ENCODE measurements at regions of chr5 and their contacts with region 1.

Region 1: DNA sequence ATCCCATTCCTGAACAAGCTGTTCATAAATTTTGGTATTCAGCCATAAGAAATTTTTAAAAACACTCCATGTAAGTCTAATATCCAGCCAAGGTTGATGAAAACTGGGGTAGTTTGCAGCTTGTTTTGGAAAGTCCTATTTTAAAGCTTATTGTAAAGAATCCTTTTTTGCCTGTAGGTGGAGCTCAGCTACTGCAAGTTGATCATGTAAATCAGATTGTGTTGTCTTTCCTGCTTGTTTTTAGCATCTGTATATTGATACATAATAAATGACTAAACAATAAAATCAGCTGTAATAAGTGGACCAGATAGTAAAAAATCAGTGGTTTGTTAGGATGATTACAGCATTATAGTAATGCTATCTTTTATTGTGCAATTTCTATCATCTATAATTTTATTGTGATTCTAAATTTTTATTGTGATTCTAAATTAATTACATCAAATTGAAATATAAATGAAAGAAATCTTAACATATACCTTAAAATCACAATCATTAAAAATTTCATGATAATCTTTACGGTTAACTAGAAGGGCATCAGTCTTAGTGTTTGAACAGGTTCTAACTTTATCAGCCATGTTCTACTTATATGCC is 42.4 kb downstream of the CWC27 start:
- DNase-seq: no peak
- H3K4me3 Mint-ChIP-seq: no peak overlapping the region
- H3K27ac Mint-ChIP-seq: no peak overlapping the region
- H3K4me1 Mint-ChIP-seq: peaks cover 7% of the 10 kb centered on the region
- H3K27me3 Mint-ChIP-seq: no peaks in the 10 kb centered on the region

Region 2: GRCh38 chr5:65035211-65036206 is 224.4 kb after region 1 on chr5:
- intact Hi-C with region 1: loop called (anchors 5 kb)
- DNase-seq: peak; percentile 79
- H3K4me3 Mint-ChIP-seq: peak overlapping the region; percentile 78
- H3K27ac Mint-ChIP-seq: peak overlapping the region; percentile 83
- H3K4me1 Mint-ChIP-seq: peaks cover 34% of the 10 kb centered on the region
- H3K27me3 Mint-ChIP-seq: no peaks in the 10 kb centered on the region

Region 3: GRCh38 chr5:65184780-65185179 is 373.6 kb after region 1 on chr5:
- intact Hi-C with region 1: loop called (anchors 5 kb)
- DNase-seq: no peak
- H3K4me3 Mint-ChIP-seq: no peak overlapping the region
- H3K27ac Mint-ChIP-seq: no peak overlapping the region
- H3K4me1 Mint-ChIP-seq: no peaks in the 10 kb centered on the region
- H3K27me3 Mint-ChIP-seq: peaks cover 15% of the 10 kb centered on the region

Region 4: DNA sequence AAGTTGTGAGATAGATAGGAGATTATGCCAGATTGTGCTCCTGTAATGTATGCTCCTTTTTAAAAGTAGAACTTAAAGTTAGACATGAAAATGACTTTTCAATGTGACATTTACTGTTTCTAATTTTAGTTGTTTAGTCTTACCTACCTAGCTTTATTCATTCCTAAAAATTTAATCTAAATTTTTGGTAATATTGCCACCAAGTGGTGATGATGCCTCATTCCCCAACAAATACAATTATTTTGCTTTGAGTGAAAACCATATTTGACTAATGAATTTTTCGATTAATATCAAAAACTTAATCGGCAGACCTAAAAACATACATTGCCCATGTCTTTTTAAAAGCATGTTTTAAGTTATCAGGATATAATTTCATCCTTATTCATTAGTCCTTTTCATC is 777.5 kb after region 1 on chr5:
- intact Hi-C with region 1: no loop called
- DNase-seq: no peak
- H3K4me3 Mint-ChIP-seq: no peak overlapping the region
- H3K27ac Mint-ChIP-seq: no peak overlapping the region
- H3K4me1 Mint-ChIP-seq: peaks cover under 1% of the 10 kb centered on the region
- H3K27me3 Mint-ChIP-seq: no peaks in the 10 kb centered on the region

Measured in activated T-helper 2 cell treated with anti-CD3 and anti-CD28 coated beads, Interferon-gamma antibody, Interleukin-2, Interleukin-4, amounts not matched to agents 10 μg/mL and 5 μg/mL and 100 μg/mL, durations not matched to agents 14 hours and 24 hours and 36 hours (primary cell).